MCF 10A (cell line): ENCODE measurements at regions of chr3 and their contacts with region 1.

Region 1: DNA sequence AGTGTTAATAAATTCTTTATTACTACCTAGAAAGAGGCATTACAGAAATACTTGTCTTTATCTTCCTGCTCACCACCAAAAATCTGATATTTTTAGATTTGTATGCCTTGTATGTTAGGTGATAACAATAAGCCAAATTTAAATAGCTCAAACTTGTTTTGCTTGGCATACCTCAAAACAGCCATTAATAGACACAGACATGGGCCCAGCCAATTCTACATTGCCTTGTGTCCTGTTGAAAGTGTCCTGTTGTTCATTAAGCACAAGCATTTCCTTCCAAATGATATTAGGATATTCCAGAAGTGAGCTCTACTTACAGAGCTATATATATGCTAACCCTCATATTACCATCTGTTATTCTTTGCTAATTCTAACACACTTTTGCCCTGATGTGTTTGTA is 438.6 kb upstream of the ZNF385D start:
- DNase-seq: no peak
- H3K4me3 Mint-ChIP-seq: no peak overlapping the region
- H3K27ac Mint-ChIP-seq: no peak overlapping the region
- H3K4me1 Mint-ChIP-seq: no peaks in the 10 kb centered on the region
- H3K27me3 Mint-ChIP-seq: no peaks in the 10 kb centered on the region
- CTCF ChIP-seq: no peak

Region 2: GRCh38 chr3:21942328-21942727 is 247.3 kb before region 1 on chr3:
- CTCF ChIA-PET with region 1: no interaction called
- POLR2A ChIA-PET with region 1: no interaction called
- intact Hi-C with region 1: no loop called
- DNase-seq: peak; percentile 61
- H3K4me3 Mint-ChIP-seq: no peak overlapping the region
- H3K27ac Mint-ChIP-seq: no peak overlapping the region
- H3K4me1 Mint-ChIP-seq: no peaks in the 10 kb centered on the region
- H3K27me3 Mint-ChIP-seq: no peaks in the 10 kb centered on the region
- CTCF ChIP-seq: no peak

Region 3: DNA sequence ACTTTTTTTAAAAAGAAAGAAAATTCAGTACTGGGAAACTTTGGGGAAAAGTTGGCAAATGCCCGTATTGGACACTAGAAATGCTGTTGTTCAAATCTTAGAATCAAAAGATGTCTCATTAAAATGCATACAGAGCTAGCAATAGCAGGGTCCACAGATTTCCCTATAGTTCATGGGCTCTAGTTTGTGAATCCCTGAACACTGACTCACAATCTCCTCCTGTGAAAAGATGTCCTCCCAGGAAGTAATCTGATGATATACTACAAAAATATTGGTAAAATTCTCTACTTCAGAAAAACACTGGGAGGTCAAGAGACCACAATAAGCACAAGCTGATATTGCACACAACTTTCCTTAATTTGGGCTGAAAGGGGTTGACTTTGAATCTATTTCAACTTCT is 129.8 kb after region 1 on chr3:
- CTCF ChIA-PET with region 1: no interaction called
- POLR2A ChIA-PET with region 1: no interaction called
- intact Hi-C with region 1: loop called (anchors 2 kb)
- DNase-seq: no peak
- H3K4me3 Mint-ChIP-seq: no peak overlapping the region
- H3K27ac Mint-ChIP-seq: no peak overlapping the region
- H3K4me1 Mint-ChIP-seq: no peaks in the 10 kb centered on the region
- H3K27me3 Mint-ChIP-seq: no peaks in the 10 kb centered on the region
- CTCF ChIP-seq: no peak